ENCODE measurements at regions of chr5 and their contacts with region 1.

Region 1: DNA sequence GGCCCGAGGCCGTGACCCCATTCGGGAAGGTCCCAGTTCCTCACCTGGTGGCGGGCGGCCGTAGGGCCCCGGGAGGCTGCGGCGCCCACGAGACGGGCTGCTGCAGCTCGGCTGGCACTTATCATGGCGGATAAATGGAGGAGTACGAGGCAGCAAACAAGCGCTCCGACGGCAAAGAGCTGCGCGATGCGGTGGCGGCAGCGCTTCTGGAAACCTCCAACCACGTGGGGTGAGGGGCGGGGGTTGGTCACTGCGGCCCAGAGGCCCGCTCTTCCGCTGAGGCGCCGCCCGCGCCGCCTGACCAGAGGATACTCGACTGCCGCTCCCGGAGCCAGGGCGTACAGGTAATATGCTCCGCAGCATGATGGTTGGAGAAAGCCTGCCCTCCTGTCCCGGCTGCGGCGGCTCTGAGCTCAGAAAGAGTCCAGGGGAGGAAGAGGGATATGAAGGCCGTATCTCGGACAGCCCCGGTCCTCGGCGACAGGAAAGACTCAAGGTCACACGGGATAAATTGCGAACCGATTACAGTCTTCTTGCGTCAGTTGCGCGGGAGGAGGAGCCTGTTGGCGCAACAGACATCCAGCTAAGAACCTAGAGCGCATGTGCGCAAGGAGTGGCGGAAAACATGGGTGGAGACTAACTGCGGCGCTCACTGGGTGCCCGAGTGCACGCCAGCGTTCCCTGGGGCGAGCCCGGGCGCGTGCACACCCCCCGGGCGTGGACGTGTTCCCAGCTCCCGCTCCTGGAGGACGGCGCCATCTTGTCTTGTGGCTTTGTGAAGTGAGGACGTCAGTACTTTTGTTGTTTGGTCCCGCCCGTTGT is at the start of gene HSPA9:
- DNase-seq: peak; percentile 97
- H3K4me3 Mint-ChIP-seq: peak within 1 kb of the TSS; percentile 95
- H3K27ac Mint-ChIP-seq: peak within 1 kb of the TSS; percentile 100
- H3K4me1 Mint-ChIP-seq: peaks cover 22% of the 10 kb centered on the region
- H3K27me3 Mint-ChIP-seq: no peaks in the 10 kb centered on the region
- total RNA-seq, gene HSPA9: 372 and 383 TPM in 2 replicates

Region 2: GRCh38 chr5:138274189-138274853 is 301.1 kb before region 1 on chr5 and contains the start of gene GFRA3:
- intact Hi-C with region 1: no loop called
- DNase-seq: no peak
- H3K4me3 Mint-ChIP-seq: peak within 1 kb of the TSS; percentile 53
- H3K27ac Mint-ChIP-seq: no peak within 1 kb of the TSS
- H3K4me1 Mint-ChIP-seq: peaks cover 6% of the 10 kb centered on the region
- H3K27me3 Mint-ChIP-seq: peaks cover 29% of the 10 kb centered on the region
- total RNA-seq, gene GFRA3: 0.13 TPM in 1 of 2 replicates, not detected in the other

Region 3: GRCh38 chr5:138491669-138492559 is 83.5 kb before region 1 on chr5:
- intact Hi-C with region 1: loop called (anchors 1 kb)
- DNase-seq: peak; percentile 83
- H3K4me3 Mint-ChIP-seq: peak overlapping the region; percentile 89
- H3K27ac Mint-ChIP-seq: peak overlapping the region; percentile 68
- H3K4me1 Mint-ChIP-seq: peaks cover 8% of the 10 kb centered on the region
- H3K27me3 Mint-ChIP-seq: peaks cover 34% of the 10 kb centered on the region

Region 4: GRCh38 chr5:138632900-138633489 is 57.6 kb after region 1 on chr5:
- intact Hi-C with region 1: loop called (anchors 1 kb)
- DNase-seq: no peak
- H3K4me3 Mint-ChIP-seq: no peak overlapping the region
- H3K27ac Mint-ChIP-seq: no peak overlapping the region
- H3K4me1 Mint-ChIP-seq: no peaks in the 10 kb centered on the region
- H3K27me3 Mint-ChIP-seq: peaks cover 29% of the 10 kb centered on the region

Region 5: GRCh38 chr5:138725138-138725833 is 149.9 kb after region 1 on chr5:
- intact Hi-C with region 1: no loop called
- DNase-seq: no peak
- H3K4me3 Mint-ChIP-seq: no peak overlapping the region
- H3K27ac Mint-ChIP-seq: no peak overlapping the region
- H3K4me1 Mint-ChIP-seq: peaks cover 30% of the 10 kb centered on the region
- H3K27me3 Mint-ChIP-seq: peaks cover 29% of the 10 kb centered on the region

Region 6: GRCh38 chr5:138752951-138753793 is 177.8 kb after region 1 on chr5 and contains the start of gene CTNNA1:
- intact Hi-C with region 1: loop called (anchors 2 kb)
- DNase-seq: peak; percentile 48
- H3K4me3 Mint-ChIP-seq: peak within 1 kb of the TSS; percentile 86
- H3K27ac Mint-ChIP-seq: peak within 1 kb of the TSS; percentile 56
- H3K4me1 Mint-ChIP-seq: peaks cover 37% of the 10 kb centered on the region
- H3K27me3 Mint-ChIP-seq: peaks cover 22% of the 10 kb centered on the region
- total RNA-seq, gene CTNNA1: 56.6 and 58.0 TPM in 2 replicates

Region 7: DNA sequence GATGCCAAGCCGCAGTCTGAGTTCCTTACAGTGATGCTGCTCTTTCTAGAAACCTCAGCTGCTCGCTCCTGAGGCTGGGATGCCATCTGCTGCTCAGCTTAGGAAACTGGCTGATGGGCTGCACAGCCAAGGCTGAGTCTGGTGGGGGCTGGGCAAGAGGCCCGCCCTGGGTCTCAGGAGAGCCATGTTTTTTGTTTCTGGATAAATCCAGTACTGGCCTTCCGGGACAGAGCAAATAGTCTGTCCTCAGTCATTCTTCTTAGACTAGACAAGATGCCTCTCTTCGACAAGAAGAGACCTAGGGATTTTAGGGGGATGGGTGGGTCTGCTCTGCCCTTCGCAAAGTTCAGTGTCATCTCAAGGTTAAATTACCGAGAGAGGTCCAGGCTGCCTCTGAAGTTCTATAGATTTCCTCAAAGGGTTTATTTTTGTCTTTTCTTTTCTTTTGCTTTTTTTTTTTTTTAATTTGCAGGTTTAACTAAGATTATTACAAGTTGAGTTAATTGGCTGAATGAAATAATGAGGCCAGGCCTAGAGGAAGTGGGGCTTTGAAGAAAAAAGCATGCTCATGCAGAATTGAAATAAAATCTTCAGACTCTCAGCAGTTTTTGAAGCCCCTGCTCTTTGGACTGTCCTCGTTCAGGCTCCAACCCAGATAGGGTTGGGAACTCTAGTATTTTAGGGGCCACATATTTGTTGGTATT is 687.5 kb after region 1 on chr5:
- intact Hi-C with region 1: loop called (anchors 1 kb)
- DNase-seq: peak; percentile 38
- H3K4me3 Mint-ChIP-seq: no peak overlapping the region
- H3K27ac Mint-ChIP-seq: no peak overlapping the region
- H3K4me1 Mint-ChIP-seq: peaks cover 4% of the 10 kb centered on the region
- H3K27me3 Mint-ChIP-seq: peaks cover 28% of the 10 kb centered on the region

Region 8: GRCh38 chr5:139293504-139294373 is 718.3 kb after region 1 on chr5 and contains the start of gene MATR3:
- intact Hi-C with region 1: loop called (anchors 1 kb)
- DNase-seq: peak; percentile 88
- H3K4me3 Mint-ChIP-seq: peak within 1 kb of the TSS; percentile 95
- H3K27ac Mint-ChIP-seq: peak within 1 kb of the TSS; percentile 94
- H3K4me1 Mint-ChIP-seq: peaks cover 37% of the 10 kb centered on the region
- H3K27me3 Mint-ChIP-seq: no peaks in the 10 kb centered on the region
- total RNA-seq, gene MATR3: 232 and 258 TPM in 2 replicates

Region 9: GRCh38 chr5:139392678-139393496 is 817.5 kb after region 1 on chr5:
- intact Hi-C with region 1: loop called (anchors 2 kb)
- DNase-seq: peak; percentile 84
- H3K4me3 Mint-ChIP-seq: peak overlapping the region; percentile 96
- H3K27ac Mint-ChIP-seq: peak overlapping the region; percentile 95
- H3K4me1 Mint-ChIP-seq: peaks cover 58% of the 10 kb centered on the region
- H3K27me3 Mint-ChIP-seq: no peaks in the 10 kb centered on the region

Measured in activated T-helper 1 cell treated with anti-CD3 and anti-CD28 coated beads, Interleukin-12 subunit alpha, Interleukin-12 subunit beta, Interleukin-2, Interleukin-4 antibody, amounts not matched to agents 30 ng/mL and 10 ng/mL and 1 ng/mL, durations not matched to agents 14 hours and 24 hours and 36 hours (primary cell).